Mammary epithelial cell (primary cell): ENCODE measurements at regions of chr1 and their contacts with region 1.

Region 1: DNA sequence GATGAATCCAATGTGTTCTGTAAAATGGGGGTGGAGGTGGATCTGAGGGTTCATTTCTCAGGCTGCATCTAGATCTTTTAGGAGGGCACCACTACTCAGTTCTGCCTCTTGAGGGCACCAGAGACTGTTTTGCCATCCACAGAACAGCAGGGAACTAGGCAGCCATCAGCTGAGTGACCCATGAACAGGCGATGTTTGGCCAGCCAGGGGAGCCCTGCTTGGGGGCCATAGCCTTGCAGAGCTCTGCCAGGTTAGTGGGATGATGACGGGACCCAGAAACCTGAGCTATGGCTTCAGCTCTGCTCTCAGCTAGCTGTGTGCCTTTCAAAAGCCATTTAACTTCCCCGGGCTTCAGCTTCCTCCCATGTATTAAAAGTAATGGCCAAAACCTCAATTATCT is 13.4 kb upstream of the NOS1AP start:
- DNase-seq: peak; percentile 50
- H3K4me3 ChIP-seq: no peak overlapping the region
- H3K27ac ChIP-seq: no peak overlapping the region
- H3K4me1 ChIP-seq: peaks cover 20% of the 10 kb centered on the region
- H3K27me3 ChIP-seq: no peaks in the 10 kb centered on the region
- CTCF ChIP-seq: peak; percentile 92 to 97

Region 2: DNA sequence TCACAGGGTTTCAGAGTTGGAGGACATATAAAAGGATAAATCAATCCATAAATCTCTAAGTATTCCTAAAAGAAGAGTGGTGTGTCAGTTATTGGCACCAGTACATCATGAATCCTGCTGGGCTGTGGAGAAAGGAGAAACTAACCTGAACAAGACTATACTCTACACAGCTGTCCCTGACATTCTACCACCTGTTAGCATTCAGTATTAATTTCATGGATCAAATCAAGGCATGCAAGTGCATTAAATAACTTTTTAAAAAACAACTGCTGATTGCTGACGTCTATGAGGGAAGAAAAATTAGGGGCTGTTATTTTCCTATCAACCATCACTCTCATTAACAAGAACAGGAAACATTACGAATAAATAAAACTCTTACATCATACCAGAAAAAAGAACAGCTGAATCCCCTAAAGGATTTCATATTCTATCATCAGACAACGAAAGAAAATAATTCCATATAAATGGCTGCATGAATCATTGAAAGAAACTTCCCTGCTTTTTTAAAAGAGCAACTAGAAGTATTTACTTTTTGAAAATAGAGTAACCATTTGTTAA is 168.2 kb before region 1 on chr1:
- CTCF ChIA-PET with region 1: no interaction called
- dilution Hi-C with region 1: no loop called
- in situ Hi-C with region 1: no loop called
- intact Hi-C with region 1: no loop called
- DNase-seq: no peak
- H3K4me3 ChIP-seq: no peak overlapping the region
- H3K27ac ChIP-seq: no peak overlapping the region
- H3K4me1 ChIP-seq: peaks cover 13% of the 10 kb centered on the region
- H3K27me3 ChIP-seq: no peaks in the 10 kb centered on the region
- CTCF ChIP-seq: no peak

Region 3: GRCh38 chr1:162117039-162117774 is 61.2 kb after region 1 on chr1:
- CTCF ChIA-PET with region 1: no interaction called
- dilution Hi-C with region 1: no loop called
- in situ Hi-C with region 1: no loop called
- intact Hi-C with region 1: no loop called
- DNase-seq: no peak
- H3K4me3 ChIP-seq: no peak overlapping the region
- H3K27ac ChIP-seq: no peak overlapping the region
- H3K4me1 ChIP-seq: peaks cover 4% of the 10 kb centered on the region
- H3K27me3 ChIP-seq: no peaks in the 10 kb centered on the region
- CTCF ChIP-seq: no peak

Region 4: DNA sequence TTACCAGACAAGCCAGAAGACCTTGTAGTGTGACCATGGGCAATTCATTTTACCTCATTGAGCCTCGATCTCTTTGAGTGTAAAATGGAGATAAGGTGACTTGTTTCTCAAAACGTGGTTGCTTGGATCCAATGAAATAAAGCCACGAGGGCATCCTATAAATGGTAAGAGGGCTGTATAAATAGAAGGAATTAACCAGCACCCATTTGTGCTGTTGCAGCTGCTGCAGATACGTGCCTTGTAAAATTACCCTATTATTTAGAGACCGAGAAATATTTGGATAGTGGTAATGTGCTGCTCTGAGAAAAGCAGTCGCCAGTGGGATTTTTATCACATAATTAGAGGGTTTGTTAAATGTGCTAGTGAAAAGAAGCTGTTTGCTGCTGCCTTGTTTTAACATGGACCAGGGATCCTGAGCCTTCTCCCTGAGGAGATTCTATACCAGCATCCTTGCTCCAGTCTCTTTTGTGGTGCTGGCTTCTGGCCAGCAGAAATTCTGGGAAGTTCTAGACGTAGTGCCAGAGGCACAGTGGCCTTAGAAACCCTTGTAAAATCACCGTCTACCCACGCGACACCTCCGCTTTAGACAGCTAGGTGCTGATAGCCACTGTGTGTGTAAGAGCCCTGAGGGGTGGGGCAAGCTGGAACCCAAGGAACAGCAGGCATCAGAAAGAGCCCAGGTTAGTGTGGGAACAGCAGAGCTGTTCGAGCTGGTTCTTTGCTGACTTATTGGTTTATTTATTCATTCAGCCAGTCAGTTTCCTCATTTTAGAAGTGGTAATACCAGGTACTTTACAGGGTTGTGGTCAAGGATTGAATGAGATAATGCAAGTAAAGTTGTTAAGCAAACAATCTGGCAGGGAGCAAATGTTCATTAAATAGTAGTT is 150.9 kb after region 1 on chr1:
- CTCF ChIA-PET with region 1: interaction called, 8 read pairs
- dilution Hi-C with region 1: no loop called
- in situ Hi-C with region 1: no loop called
- intact Hi-C with region 1: loop called (anchors 5 kb)
- DNase-seq: peak; percentile 82
- H3K4me3 ChIP-seq: no peak overlapping the region
- H3K27ac ChIP-seq: no peak overlapping the region
- H3K4me1 ChIP-seq: peaks cover 8% of the 10 kb centered on the region
- H3K27me3 ChIP-seq: no peaks in the 10 kb centered on the region
- CTCF ChIP-seq: no peak

Region 5: GRCh38 chr1:162276493-162276892 is 220.4 kb after region 1 on chr1:
- CTCF ChIA-PET with region 1: interaction called, 5 read pairs
- dilution Hi-C with region 1: no loop called
- in situ Hi-C with region 1: loop called (anchors 5 to 10 kb)
- intact Hi-C with region 1: loop called (anchors 1 kb)
- DNase-seq: peak; percentile 16
- H3K4me3 ChIP-seq: no peak overlapping the region
- H3K27ac ChIP-seq: no peak overlapping the region
- H3K4me1 ChIP-seq: no peaks in the 10 kb centered on the region
- H3K27me3 ChIP-seq: no peaks in the 10 kb centered on the region
- CTCF ChIP-seq: peak in 1 of 2 donors; percentile 57

Region 6: DNA sequence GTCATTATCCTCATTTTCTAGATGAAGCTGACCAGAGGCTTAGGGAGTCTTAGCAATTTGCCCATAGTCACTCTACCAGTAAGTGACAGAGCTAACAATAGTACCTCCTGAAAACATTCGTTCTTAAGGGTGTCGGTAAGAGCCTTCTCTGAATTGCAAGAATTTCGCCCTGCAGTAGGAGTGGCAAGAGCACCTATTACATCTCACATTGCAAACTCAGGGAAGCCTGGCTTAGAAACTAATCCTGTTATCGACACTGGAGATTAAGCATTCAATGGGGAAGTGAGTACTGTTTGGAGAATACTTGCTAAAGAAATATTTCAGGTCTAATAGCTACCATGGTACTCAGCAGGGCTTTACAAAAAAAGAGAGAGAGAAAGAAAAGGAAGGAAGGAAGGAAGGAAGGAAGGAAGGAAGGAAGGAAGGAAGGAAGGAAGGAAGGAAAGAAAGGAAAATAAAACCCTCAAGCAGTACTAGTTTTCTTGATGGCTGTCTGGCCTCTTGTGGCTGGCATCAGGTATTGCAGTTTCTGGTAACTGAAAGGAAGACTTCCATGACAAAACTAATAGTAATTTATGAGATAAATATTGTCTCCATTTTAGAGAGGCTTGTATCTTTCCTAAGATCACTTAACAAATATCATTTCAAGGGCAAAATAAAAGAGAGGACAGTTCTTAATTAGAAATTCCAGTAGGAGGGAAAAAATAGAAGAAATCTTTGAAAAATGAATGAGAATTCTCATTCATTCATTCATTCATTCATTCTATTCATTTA is 335.9 kb after region 1 on chr1:
- CTCF ChIA-PET with region 1: no interaction called
- dilution Hi-C with region 1: no loop called
- in situ Hi-C with region 1: loop called in 1 of 2 experiments (anchors 10 kb)
- intact Hi-C with region 1: loop called (anchors 1 kb)
- DNase-seq: no peak
- H3K4me3 ChIP-seq: no peak overlapping the region
- H3K27ac ChIP-seq: no peak overlapping the region
- H3K4me1 ChIP-seq: peaks cover 4% of the 10 kb centered on the region
- H3K27me3 ChIP-seq: peaks cover 2% of the 10 kb centered on the region
- CTCF ChIP-seq: peak; percentile 85 to 90

Region 7: DNA sequence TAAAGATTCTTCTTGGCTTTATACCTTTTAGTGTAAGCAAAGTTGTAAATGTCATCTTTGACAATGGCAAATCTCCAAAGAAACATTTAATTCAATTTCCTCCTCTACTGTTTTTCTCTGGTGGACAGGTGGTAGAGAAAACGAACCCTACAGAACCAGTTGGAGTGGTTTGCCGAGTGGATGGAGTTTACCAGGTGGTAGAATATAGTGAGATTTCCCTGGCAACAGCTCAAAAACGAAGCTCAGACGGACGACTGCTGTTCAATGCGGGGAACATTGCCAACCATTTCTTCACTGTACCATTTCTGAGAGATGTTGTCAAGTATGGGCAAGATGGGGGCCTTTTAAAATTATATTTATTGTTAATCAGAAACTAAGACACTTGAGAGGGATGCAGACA is 531.3 kb after region 1 on chr1:
- CTCF ChIA-PET with region 1: no interaction called
- dilution Hi-C with region 1: no loop called
- in situ Hi-C with region 1: no loop called
- intact Hi-C with region 1: loop called (anchors 10 kb)
- DNase-seq: no peak
- H3K4me3 ChIP-seq: no peak overlapping the region
- H3K27ac ChIP-seq: no peak overlapping the region
- H3K4me1 ChIP-seq: no peaks in the 10 kb centered on the region
- H3K27me3 ChIP-seq: no peaks in the 10 kb centered on the region
- CTCF ChIP-seq: no peak